Calu3 (cell line): ENCODE measurements at regions of chrX and their contacts with region 1.

Region 1: DNA sequence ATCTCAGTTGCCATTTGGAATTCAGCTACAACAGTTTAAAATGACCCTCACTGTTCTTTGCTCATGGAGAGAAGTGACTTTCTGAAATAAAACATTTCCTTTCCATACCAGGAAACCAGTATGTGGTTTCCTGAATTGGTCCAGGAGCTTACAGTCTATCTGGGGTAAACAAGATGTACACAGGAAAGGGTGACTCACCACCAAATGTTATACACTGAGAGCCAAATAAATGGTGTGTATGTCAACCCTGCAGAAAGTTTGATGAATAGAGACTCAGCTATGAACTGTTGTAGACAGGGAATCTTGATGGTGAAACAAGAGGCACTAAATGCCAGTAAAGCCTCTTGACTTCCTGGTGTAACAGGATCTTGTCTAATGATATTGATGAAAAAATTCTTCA is 100.4 kb downstream of the HS6ST2 start:
- DNase-seq: peak; percentile 3
- H3K4me3 Mint-ChIP-seq: no peak overlapping the region
- H3K27ac Mint-ChIP-seq: peak overlapping the region; percentile 40
- H3K4me1 Mint-ChIP-seq: peaks cover 31% of the 10 kb centered on the region
- H3K27me3 Mint-ChIP-seq: no peaks in the 10 kb centered on the region
- CTCF ChIP-seq: no peak

Region 2: DNA sequence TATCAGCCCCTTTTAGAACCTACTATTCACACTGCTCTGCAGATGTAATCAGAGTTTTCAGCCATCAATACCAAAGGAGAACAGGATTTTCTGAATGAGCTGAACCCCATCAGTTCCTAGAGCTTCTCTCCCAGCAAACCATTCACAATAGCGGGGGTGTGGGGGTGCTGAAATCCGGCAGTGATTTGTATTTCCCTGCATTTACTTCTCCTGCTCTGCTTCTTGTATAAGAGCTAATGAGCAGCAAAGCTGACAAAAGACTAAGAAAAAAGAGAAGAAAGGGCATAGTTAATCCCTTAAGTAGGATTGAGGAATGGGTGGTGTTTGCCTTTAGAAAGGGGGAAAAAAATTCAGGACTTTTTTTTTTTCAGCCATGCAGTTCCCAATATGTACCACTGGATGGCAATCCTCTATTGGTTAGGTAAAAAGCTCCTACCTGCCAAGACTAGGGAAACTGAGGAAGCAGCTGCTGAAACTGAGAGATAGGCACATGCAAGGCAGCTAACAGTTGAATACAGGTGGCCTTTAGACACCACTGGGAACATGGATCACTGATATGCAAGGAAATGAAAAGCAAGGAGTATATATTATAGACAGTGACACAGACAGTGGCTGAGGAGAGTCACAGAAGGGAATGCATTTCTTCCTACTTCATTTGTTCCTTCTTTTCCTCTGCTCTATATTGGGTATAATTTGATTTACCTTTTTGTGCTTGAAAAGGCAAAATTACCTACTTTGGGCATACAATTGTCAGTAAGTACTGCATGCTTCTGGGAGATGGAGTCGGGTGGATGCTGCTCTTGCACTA is 117.5 kb before region 1 on chrX:
- CTCF ChIA-PET with region 1: no interaction called
- intact Hi-C with region 1: loop called (anchors 5 kb)
- DNase-seq: no peak
- H3K4me3 Mint-ChIP-seq: no peak overlapping the region
- H3K27ac Mint-ChIP-seq: no peak overlapping the region
- H3K4me1 Mint-ChIP-seq: peaks cover 13% of the 10 kb centered on the region
- H3K27me3 Mint-ChIP-seq: no peaks in the 10 kb centered on the region
- CTCF ChIP-seq: peak; percentile 75

Region 3: DNA sequence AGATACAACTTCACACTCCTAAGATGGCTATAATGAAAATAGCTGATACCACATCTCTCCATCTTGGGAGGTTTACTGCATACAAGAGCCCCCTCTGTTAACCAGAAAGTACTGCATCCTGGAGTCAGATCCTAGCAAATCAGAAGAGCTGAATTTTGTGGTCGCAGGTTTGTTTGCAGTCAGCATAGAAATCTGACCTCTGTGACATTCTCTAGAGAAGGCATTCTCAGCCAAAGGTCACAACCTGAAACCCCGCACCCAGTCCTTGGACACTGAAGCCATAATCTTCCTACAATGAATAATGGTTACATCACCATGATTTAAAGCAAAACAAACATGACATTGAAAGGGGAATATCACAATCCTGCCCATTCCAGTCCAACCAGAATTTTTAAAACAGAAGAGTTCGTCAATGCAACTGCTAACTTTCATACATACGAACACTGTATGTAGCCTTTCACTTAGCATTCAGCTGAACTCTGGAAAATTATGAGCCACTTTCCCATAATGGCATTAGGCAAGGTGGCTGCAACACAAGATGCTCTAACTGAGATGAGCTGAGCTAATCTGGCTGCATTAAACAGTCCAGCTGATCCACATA is 82.8 kb after region 1 on chrX:
- CTCF ChIA-PET with region 1: no interaction called
- intact Hi-C with region 1: loop called (anchors 5 kb)
- DNase-seq: peak; percentile 66
- H3K4me3 Mint-ChIP-seq: no peak overlapping the region
- H3K27ac Mint-ChIP-seq: peak overlapping the region; percentile 50
- H3K4me1 Mint-ChIP-seq: peaks cover 33% of the 10 kb centered on the region
- H3K27me3 Mint-ChIP-seq: no peaks in the 10 kb centered on the region
- CTCF ChIP-seq: peak; percentile 23